ENCODE measurements at regions of chr18 and their contacts with region 1.

Region 1: GRCh38 chr18:52764316-52764715 is 424.3 kb downstream of the DCC start:
- DNase-seq: no peak
- ATAC-seq: no peak
- H3K4me3 ChIP-seq: no peak overlapping the region
- H3K27ac ChIP-seq: no peak overlapping the region
- H3K4me1 ChIP-seq: no peaks in the 10 kb centered on the region
- H3K27me3 ChIP-seq: no peaks in the 10 kb centered on the region
- CTCF ChIP-seq: no peak
- EP300 ChIP-seq: no peak
- POLR2A ChIP-seq: no peak
- RAD21 ChIP-seq: no peak

Region 2: DNA sequence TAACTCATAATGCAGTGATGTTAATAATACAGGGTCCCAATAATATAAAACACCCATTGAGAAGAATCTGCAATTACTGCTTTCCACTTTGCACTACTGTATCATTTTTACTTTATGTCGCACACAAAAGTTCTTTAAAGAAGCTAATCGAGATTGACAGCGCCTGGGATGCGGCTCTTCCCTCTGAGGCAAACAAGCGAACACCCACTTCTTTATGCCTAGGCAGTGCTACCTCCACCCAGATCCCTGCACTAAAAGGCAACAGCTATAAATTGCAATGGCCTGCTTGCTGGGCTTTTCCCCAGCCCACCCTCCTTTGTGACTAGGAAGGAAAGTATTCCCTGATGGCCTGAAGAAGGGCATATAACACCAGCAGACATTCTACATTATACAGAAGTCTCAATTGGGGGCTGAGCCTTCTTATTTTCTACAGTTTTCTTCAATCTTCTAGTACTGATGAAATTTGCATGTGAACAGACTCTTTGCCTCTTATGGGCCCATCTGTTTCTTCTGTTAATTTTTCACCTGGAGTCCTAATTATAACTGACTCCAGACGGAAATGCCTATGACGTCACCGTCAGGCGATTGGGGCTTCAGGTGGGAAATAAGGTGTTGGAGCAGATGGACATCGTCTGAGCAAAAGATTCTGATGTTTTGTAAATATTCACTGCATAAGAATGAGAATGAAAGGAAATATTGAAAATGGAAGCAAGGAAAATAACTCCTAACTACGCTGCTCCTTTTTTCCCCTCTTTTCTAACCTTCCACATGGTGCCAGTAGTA is 563.2 kb before region 1 on chr18:
- CTCF ChIA-PET with region 1: no interaction called
- POLR2A ChIA-PET with region 1: no interaction called
- in situ Hi-C with region 1: no loop called
- intact Hi-C with region 1: no loop called
- DNase-seq: no peak
- ATAC-seq: no peak
- H3K4me3 ChIP-seq: no peak overlapping the region
- H3K27ac ChIP-seq: no peak overlapping the region
- H3K4me1 ChIP-seq: no peaks in the 10 kb centered on the region
- H3K27me3 ChIP-seq: no peaks in the 10 kb centered on the region
- CTCF ChIP-seq: no peak
- EP300 ChIP-seq: no peak
- POLR2A ChIP-seq: no peak
- RAD21 ChIP-seq: no peak

Region 3: DNA sequence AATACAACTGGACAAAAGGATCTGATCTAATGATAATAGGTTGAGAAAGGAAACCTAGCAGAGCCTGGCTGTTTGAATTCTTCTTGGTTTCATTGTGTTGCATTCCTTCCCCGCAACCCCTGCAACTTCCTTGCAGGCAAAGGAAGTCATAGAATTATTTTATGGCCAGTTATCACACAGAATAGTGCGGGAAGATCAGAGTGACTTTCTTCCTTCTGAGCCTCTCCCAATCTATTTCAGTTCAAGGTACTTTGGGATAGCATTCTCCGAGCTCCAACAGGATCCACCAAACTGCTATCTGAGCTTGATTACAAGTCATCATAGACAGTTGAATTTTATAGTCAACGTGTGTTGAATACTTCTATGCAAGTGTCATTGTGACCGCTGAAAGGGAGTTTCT is 16.8 kb after region 1 on chr18:
- CTCF ChIA-PET with region 1: no interaction called
- POLR2A ChIA-PET with region 1: no interaction called
- in situ Hi-C with region 1: no loop called
- intact Hi-C with region 1: no loop called
- DNase-seq: no peak
- ATAC-seq: no peak
- H3K4me3 ChIP-seq: no peak overlapping the region
- H3K27ac ChIP-seq: no peak overlapping the region
- H3K4me1 ChIP-seq: no peaks in the 10 kb centered on the region
- H3K27me3 ChIP-seq: no peaks in the 10 kb centered on the region
- CTCF ChIP-seq: no peak
- EP300 ChIP-seq: no peak
- POLR2A ChIP-seq: no peak
- RAD21 ChIP-seq: no peak

Region 4: DNA sequence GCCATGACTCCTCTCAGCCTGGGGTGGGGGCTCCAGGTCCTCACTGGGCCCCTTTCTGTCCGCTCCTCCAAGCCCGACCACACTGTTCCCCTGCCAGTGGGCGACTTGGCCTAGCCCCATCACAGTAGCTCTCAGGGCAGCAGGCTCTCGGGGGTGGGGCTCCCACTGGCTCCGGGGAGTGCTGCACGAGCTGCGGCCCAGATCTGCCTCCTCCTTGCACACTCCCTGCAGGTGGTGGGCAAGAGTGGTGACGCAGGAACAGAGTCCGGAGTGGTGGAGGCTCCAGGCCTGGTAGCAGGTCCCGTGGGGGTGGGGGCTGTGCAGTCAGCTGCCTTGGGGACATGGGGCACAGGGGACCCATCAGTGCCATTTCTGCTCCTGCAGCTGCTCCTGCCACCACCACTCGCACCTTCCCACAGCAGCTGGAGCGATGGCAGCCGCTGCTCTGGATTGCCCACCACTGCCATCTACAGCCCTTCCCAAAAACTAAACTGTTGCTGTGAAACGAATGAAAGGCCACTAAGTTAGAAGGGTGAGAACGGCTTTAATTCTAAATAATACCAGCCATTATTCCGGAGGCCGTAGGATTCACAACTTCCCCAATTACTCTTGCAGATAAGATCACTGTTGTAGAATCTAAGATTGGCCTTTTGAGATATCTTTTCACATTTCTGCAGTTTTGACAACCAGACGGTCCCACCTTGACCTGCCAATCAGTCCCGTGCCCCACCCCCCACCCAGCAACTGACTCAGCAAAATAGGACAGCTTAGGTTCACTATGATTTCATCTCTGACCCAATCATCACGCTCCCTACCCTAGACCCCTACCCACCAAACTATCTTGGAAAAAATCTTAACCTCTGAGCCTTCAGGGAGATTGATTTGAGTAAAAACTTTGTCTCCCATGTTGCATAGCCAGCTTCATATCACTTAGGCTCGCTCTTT is 105.9 kb after region 1 on chr18:
- CTCF ChIA-PET with region 1: no interaction called
- POLR2A ChIA-PET with region 1: no interaction called
- in situ Hi-C with region 1: loop called (anchors 25 kb)
- intact Hi-C with region 1: no loop called
- DNase-seq: no peak
- ATAC-seq: no peak
- H3K4me3 ChIP-seq: no peak overlapping the region
- H3K27ac ChIP-seq: no peak overlapping the region
- H3K4me1 ChIP-seq: no peaks in the 10 kb centered on the region
- H3K27me3 ChIP-seq: no peaks in the 10 kb centered on the region
- CTCF ChIP-seq: no peak
- EP300 ChIP-seq: no peak
- POLR2A ChIP-seq: no peak
- RAD21 ChIP-seq: no peak

Measured in HepG2 (cell line).